ENCODE measurements at regions of chr20 and their contacts with region 1.

Region 1: DNA sequence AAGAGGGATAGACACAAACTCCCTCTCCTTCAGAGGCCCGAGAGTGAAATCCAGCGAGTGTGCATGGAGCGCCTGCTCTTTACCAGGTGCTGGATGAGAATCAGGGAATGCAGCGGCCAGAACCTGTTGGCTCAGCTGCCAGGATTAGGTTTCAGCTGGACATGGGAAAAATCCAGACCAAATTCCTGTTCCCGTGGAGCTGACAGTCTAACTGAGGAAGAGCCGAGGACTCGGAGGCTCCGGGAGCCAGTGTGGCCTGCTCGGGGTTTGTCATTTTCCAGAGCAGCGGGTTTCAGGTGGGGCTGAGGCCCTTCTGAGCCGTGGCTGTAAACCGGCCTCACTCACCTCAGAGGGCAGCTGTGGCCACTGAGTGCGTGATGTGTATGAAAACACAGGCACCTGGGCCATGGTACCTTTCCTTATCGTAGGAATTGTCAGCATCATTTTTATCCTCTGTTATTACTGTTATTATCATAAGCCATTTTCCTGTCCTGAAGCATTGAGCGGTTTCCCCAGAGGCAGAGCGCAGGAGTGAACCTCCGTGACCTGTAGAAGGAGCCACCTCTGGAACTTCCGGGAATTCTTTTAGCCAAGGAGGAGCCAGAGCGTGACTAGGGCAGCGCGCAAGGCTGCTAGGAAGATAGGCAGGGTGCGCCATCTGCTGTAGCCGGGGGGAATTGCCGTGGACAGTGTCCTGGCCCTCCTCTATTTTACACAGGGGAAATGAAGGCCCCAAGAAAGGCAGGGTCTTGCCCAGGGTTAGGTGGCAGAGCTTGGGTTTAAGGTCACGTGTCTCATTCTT is 27.3 kb downstream of the PKIG start:
- DNase-seq: peak; percentile 78
- H3K4me3 Mint-ChIP-seq: no peak overlapping the region
- H3K27ac Mint-ChIP-seq: peak overlapping the region; percentile 48
- H3K4me1 Mint-ChIP-seq: peaks cover 12% of the 10 kb centered on the region
- H3K27me3 Mint-ChIP-seq: no peaks in the 10 kb centered on the region

Region 2: DNA sequence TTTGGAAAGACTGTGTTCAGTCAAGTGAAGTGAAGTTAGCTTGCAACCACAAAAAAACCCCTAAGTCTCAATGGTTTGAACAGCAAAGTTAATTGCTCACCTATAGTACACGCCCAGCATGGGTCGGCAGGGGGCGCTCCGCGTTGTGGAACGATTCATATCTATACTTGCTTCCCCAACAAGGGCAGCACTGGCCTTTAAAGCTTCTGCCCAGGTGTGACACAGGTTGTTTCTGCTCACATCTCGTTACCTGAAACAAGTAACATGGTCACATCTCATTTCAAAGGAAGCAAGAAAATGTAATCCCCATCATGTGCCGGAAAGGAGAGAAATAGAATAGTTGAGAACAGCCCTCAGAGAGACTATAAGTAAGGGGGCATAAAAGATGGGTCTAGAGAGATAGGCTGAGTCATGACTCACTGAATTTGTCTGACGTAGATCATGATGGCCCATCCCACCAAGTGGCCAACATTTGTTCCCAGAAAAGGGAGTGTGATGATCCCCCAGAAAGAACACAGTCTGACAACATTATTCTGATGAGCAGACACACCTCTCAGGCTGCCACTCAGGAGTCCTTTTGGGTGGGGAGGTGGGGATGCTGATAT is 225.2 kb before region 1 on chr20:
- CTCF ChIA-PET with region 1: interaction called, 28 read pairs
- POLR2A ChIA-PET with region 1: no interaction called
- DNase-seq: peak; percentile 84
- H3K4me3 Mint-ChIP-seq: no peak overlapping the region
- H3K27ac Mint-ChIP-seq: no peak overlapping the region
- H3K4me1 Mint-ChIP-seq: peaks cover 5% of the 10 kb centered on the region
- H3K27me3 Mint-ChIP-seq: peaks cover 18% of the 10 kb centered on the region

Region 3: GRCh38 chr20:44475694-44476560 is 133.8 kb before region 1 on chr20 and contains the start of gene TTPAL:
- CTCF ChIA-PET with region 1: interaction called, 10 read pairs
- POLR2A ChIA-PET with region 1: interaction called, 5 read pairs
- DNase-seq: peak; percentile 91
- H3K4me3 Mint-ChIP-seq: peak within 1 kb of the TSS; percentile 93
- H3K27ac Mint-ChIP-seq: peak within 1 kb of the TSS; percentile 91
- H3K4me1 Mint-ChIP-seq: peaks cover 25% of the 10 kb centered on the region
- H3K27me3 Mint-ChIP-seq: no peaks in the 10 kb centered on the region
- total RNA-seq, gene TTPAL: 15.5 to 16.6 TPM

Region 4: DNA sequence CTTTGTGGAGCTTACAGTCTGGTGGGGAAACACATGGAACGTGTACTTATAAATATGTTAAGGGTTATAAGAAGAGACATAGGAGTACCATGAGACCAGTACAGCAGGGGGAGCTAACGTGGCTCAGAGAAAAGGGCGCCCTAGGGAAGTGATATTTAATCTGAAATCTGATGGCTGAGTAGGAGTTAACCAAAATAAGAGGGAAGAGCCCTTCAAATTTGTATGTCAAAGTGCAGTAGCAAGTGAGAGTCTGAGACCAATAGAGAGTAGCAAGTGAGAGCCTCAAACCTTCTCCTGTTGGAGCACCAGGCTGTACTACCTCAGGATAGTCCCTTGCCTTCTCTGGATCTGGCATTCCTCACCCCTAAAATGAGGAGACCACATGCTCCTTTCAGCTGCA is 33.4 kb before region 1 on chr20:
- CTCF ChIA-PET with region 1: no interaction called
- POLR2A ChIA-PET with region 1: no interaction called
- DNase-seq: no peak
- H3K4me3 Mint-ChIP-seq: no peak overlapping the region
- H3K27ac Mint-ChIP-seq: no peak overlapping the region
- H3K4me1 Mint-ChIP-seq: peaks cover 28% of the 10 kb centered on the region
- H3K27me3 Mint-ChIP-seq: peaks cover 1% of the 10 kb centered on the region

Region 5: GRCh38 chr20:44587035-44587980 is 22.4 kb before region 1 on chr20:
- CTCF ChIA-PET with region 1: no interaction called
- POLR2A ChIA-PET with region 1: no interaction called
- DNase-seq: no peak
- H3K4me3 Mint-ChIP-seq: no peak overlapping the region
- H3K27ac Mint-ChIP-seq: no peak overlapping the region
- H3K4me1 Mint-ChIP-seq: peaks cover 2% of the 10 kb centered on the region
- H3K27me3 Mint-ChIP-seq: no peaks in the 10 kb centered on the region

Region 6: GRCh38 chr20:44598423-44599305 is 11.0 kb before region 1 on chr20:
- CTCF ChIA-PET with region 1: interaction called, 14 read pairs
- POLR2A ChIA-PET with region 1: interaction called, 3 read pairs
- DNase-seq: no peak
- H3K4me3 Mint-ChIP-seq: no peak overlapping the region
- H3K27ac Mint-ChIP-seq: no peak overlapping the region
- H3K4me1 Mint-ChIP-seq: peaks cover 13% of the 10 kb centered on the region
- H3K27me3 Mint-ChIP-seq: no peaks in the 10 kb centered on the region

Measured in activated CD4-positive, alpha-beta memory T cell treated with anti-CD3 and anti-CD28 coated beads, Interleukin-2, amount 10 ng/mL, durations not matched to agents 7 days and 5 days (primary cell).